PC-9 (cell line): ENCODE measurements at regions of chr7 and their contacts with region 1.

Region 1: DNA sequence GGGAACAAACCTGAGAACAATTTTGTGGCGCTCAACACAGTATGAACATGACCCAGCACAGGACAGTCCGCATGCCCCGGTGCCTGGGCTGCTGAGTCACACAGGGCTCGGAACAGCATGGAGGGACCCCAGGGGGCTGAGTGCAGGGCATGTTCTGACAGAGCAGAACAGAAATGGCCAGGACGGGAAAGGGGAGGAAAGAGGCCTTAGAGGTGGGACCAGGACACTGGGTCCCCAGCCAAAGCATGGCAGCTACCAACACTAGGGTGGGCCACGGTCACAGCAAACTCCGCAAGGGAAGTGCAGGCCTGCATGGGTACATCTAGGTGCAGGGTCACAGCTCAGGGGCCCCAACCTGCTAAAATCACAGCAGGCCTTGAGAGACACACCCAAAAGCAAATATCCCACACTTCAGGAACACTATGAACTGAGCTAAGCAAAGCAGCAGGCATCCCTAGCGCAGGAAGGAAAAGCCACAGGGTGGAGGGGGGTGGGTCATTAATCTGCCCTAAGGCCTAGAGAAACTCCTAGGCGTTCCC is 5.6 kb downstream of the IMPDH1 start:
- DNase-seq: no peak
- H3K4me3 ChIP-seq: peak overlapping the region; percentile 74; the same call in 1 of the 2 replicates
- H3K27ac ChIP-seq: no peak overlapping the region
- H3K4me1 ChIP-seq: peaks cover 29% of the 10 kb centered on the region
- H3K27me3 ChIP-seq: no peaks in the 10 kb centered on the region
- CTCF ChIP-seq: no peak

Region 2: DNA sequence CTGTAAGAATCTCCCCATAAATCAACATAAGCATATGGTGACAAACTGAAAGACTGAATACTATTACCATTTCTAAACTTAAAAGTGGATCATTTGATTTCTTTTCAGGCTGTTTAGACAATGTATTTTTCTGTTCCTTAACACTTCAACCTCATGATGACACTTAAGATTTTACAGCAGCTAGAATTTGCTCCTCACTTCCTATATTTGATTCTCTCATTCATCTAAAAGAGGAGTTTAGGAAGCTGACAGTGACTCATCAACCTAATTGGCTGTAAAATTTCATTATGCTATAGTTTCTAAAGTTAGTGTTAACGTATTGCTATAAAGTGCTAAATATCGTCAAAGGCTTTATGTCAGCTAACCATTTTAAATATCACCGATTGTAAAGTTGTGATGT is 1630.1 kb before region 1 on chr7:
- CTCF ChIA-PET with region 1: no interaction called
- POLR2A ChIA-PET with region 1: no interaction called
- intact Hi-C with region 1: no loop called
- DNase-seq: no peak
- H3K4me3 ChIP-seq: no peak overlapping the region
- H3K27ac ChIP-seq: no peak overlapping the region
- H3K4me1 ChIP-seq: no peaks in the 10 kb centered on the region
- H3K27me3 ChIP-seq: no peaks in the 10 kb centered on the region
- CTCF ChIP-seq: no peak

Region 3: GRCh38 chr7:128450409-128450808 is 46.2 kb after region 1 on chr7:
- CTCF ChIA-PET with region 1: interaction called, 18 read pairs
- POLR2A ChIA-PET with region 1: no interaction called
- intact Hi-C with region 1: no loop called
- DNase-seq: no peak
- H3K4me3 ChIP-seq: no peak overlapping the region
- H3K27ac ChIP-seq: no peak overlapping the region
- H3K4me1 ChIP-seq: peaks cover 17% of the 10 kb centered on the region; the same call in 1 of the 2 replicates
- H3K27me3 ChIP-seq: no peaks in the 10 kb centered on the region
- CTCF ChIP-seq: no peak